Testis (tissue), 5 donors: ENCODE measurements at regions of chr13 and their contacts with region 1.

Region 1: DNA sequence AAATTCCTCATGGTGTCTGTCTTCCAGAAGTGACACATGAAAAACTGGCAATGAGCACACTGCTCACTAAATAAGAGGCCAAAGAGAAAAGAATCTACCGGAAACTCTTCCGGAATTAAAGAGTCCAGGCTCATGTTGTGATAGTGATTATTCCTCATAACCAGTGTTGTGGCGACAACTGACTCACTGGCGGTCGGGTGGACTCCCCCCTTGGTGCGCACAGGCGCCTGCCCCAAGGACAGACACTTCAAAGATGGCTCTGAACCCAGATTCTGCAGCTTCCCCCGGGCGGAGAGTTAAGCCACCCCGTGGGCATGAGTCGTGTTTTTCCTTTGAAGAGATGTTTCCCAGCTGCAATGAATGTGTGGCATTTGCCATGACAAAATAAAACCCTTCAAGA is 10.3 kb downstream of the IL17D start:
- DNase-seq: no peak
- H3K4me3 ChIP-seq: no peak overlapping the region
- H3K27ac ChIP-seq: peak overlapping the region in 1 of 2 donors; percentile 78
- H3K4me1 ChIP-seq: peaks cover 11% of the 10 kb centered on the region
- H3K27me3 ChIP-seq: no peaks in the 10 kb centered on the region
- CTCF ChIP-seq: no peak
- POLR2A ChIP-seq: no peak

Region 2: GRCh38 chr13:20814224-20814910 is 100.6 kb after region 1 on chr13:
- intact Hi-C with region 1: loop called (anchors 10 kb)
- DNase-seq: peak; percentile 43
- H3K4me3 ChIP-seq: no peak overlapping the region
- H3K27ac ChIP-seq: peak overlapping the region in 1 of 2 donors; percentile 9
- H3K4me1 ChIP-seq: no peaks in the 10 kb centered on the region
- H3K27me3 ChIP-seq: no peaks in the 10 kb centered on the region
- CTCF ChIP-seq: no peak
- POLR2A ChIP-seq: no peak